Common myeloid progenitor, CD34-positive (primary cell): ENCODE measurements at regions of chr2 and their contacts with region 1.

Region 1: GRCh38 chr2:64595397-64596160 is 58.1 kb downstream of the SERTAD2 start:
- DNase-seq: no peak
- H3K4me3 ChIP-seq: no peak overlapping the region
- H3K27ac ChIP-seq: no peak overlapping the region
- H3K4me1 ChIP-seq: peaks cover 0 to 13% (median 5%) of the 10 kb centered on the region in 4 experiments
- H3K27me3 ChIP-seq: no peaks in the 10 kb centered on the region

Region 2: GRCh38 chr2:64179582-64180321 is 415.8 kb before region 1 on chr2:
- CTCF ChIA-PET with region 1: no interaction called
- POLR2A ChIA-PET with region 1: no interaction called
- DNase-seq: peak in 1 of 3 donors; percentile 26
- H3K4me3 ChIP-seq: no peak overlapping the region
- H3K27ac ChIP-seq: no peak overlapping the region
- H3K4me1 ChIP-seq: no peaks in the 10 kb centered on the region
- H3K27me3 ChIP-seq: no peaks in the 10 kb centered on the region

Region 3: DNA sequence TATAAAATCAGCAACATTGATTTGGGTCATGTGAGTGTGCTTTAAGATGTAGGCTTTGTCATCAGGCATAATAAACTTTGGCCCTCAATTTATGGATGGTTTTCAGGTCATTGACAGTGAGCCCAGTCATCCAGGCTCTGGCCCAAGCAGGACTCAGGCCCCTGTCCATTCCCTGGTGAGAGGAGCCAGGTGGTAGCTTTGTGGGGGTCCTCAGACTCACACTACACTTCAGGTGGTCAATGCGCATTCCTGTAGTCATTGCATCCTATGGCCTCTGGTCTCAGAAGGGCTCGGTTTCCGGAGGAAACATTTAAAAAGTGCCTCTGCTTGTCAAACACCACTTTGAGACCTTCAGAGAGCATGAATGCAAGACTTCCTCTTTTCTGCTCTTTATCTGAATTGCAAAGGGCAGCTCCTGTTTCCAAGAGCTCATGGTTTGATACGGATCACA is 121.4 kb before region 1 on chr2:
- CTCF ChIA-PET with region 1: no interaction called
- POLR2A ChIA-PET with region 1: no interaction called
- DNase-seq: peak; percentile 70 to 91 (median 87)
- H3K4me3 ChIP-seq: peak overlapping the region in 1 of 7 experiments; percentile 29
- H3K27ac ChIP-seq: no peak overlapping the region
- H3K4me1 ChIP-seq: peaks cover 2 to 22% (median 17%) of the 10 kb centered on the region in 4 experiments
- H3K27me3 ChIP-seq: no peaks in the 10 kb centered on the region

Region 4: DNA sequence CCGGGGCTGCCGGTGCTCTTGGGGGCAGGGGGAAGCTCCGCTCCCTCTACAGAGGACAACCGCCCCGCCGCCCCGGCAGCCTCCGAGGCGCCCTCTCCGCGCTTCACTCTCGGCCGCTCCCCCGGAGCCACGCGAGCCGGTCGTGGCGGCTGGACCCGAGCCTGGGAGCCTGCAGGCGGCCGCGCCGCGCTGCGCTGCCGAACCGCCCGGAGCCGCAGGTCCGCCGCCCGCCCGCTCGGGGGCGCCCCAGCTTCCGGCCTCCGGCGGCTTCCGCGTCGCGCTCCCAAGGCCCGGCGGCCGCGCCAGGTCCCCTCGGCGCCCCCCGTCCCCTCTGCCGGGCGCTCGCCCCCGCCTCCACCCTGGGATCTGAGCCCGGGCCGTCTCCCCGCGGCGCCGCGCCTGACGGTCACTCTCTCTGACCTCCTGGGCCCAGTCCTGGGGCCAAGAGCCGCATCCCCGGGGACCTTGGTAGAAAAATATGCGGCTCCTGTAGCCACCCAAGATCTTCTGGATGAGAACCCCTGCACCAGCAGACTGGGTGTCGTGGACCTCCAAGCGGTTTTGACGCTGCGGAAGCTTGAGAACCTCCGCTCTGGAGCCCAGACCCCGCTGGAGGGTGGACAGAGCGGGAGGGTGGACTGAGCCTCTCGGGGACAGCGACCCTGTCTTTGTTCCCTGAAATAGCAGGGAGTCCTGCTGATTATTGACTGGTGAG is 13.8 kb after region 1 on chr2:
- CTCF ChIA-PET with region 1: interaction called, 61 read pairs
- POLR2A ChIA-PET with region 1: no interaction called
- DNase-seq: peak; percentile 73 to 86 (median 84)
- H3K4me3 ChIP-seq: peak overlapping the region; percentile 32 to 86 (median 73)
- H3K27ac ChIP-seq: peak overlapping the region; percentile 77 to 85
- H3K4me1 ChIP-seq: peaks cover 10 to 38% (median 32%) of the 10 kb centered on the region in 4 experiments
- H3K27me3 ChIP-seq: no peaks in the 10 kb centered on the region

Region 5: DNA sequence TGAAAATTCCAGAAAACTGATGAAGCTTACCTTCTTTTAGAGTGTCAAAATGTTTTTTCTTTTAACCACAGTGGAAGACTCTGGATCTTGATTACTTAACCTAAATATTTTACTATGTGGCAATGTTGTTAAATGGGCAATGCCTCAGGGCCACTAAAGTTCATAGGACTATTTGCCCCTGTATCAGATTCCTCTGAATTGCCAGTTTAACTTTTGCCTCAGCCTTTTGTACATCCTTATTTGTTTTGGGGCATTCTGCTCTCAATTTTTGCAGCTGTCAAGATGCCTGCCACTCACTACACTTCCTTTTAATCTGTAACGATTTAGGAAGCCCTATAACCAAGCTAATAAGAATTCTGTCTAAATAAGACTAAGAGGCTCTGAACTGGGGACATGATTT is 89.9 kb after region 1 on chr2:
- CTCF ChIA-PET with region 1: no interaction called
- POLR2A ChIA-PET with region 1: no interaction called
- DNase-seq: peak in 2 of 3 donors; percentile 42 to 61
- H3K4me3 ChIP-seq: no peak overlapping the region
- H3K27ac ChIP-seq: no peak overlapping the region
- H3K4me1 ChIP-seq: peaks cover 11 to 21% (median 15%) of the 10 kb centered on the region in 4 experiments
- H3K27me3 ChIP-seq: no peaks in the 10 kb centered on the region

Region 6: GRCh38 chr2:64797881-64798575 is 202.4 kb after region 1 on chr2:
- CTCF ChIA-PET with region 1: no interaction called
- POLR2A ChIA-PET with region 1: no interaction called
- DNase-seq: no peak
- H3K4me3 ChIP-seq: no peak overlapping the region
- H3K27ac ChIP-seq: no peak overlapping the region
- H3K4me1 ChIP-seq: peaks cover 0 to 23% (median 12%) of the 10 kb centered on the region in 4 experiments
- H3K27me3 ChIP-seq: no peaks in the 10 kb centered on the region

Region 7: DNA sequence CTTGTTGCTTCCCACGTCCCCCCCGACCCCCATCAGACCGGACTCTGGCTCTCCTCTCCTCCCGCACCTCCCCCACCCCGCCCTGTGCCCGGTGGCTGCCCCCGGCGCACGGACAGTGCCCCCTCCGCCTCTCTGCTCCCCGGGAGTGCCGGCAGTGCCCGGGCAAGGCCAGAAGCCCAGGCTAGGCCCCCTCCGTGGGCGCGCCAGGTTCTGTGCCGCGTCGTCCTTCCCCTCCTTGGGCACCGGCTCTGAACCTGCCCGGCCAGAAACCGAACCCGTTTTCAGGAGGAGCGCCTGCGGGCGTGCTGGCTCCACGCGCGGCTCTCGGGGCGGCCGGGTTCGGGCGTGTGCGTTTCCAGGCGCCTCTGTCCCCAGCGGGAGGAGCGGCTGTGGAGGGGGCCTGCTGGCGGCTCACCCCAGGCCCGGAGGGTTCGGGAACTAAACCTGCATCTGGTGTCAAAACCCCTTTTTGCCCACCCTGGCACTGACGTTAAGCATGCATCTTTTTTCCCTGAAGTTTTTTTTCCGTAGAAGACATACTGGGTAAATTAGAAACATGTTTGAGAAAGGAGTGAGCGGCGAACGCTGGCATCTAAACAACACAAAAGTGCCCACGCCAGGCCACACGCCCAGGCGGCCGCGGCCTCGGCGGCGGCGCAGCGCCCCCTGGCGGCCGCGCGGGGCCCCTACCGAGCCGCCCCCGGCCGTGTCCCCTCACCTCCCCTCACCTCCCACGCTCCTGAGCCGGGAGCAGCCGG is 269.7 kb after region 1 on chr2:
- CTCF ChIA-PET with region 1: interaction called, 29 read pairs
- POLR2A ChIA-PET with region 1: no interaction called
- DNase-seq: peak; percentile 61 to 84 (median 82)
- H3K4me3 ChIP-seq: peak overlapping the region; percentile 42 to 83 (median 75)
- H3K27ac ChIP-seq: peak overlapping the region in 1 of 2 experiments; percentile 65
- H3K4me1 ChIP-seq: peaks cover 10 to 52% (median 23%) of the 10 kb centered on the region in 4 experiments
- H3K27me3 ChIP-seq: no peaks in the 10 kb centered on the region